Aorta (tissue), 5 donors: ENCODE measurements at regions of chr6 and their contacts with region 1.

Region 1: GRCh38 chr6:152218880-152219279 is 411.4 kb downstream of the ESR1 start:
- DNase-seq: no peak
- ATAC-seq: no peak
- H3K4me3 ChIP-seq: no peak overlapping the region
- H3K27ac ChIP-seq: no peak overlapping the region
- H3K4me1 ChIP-seq: no peaks in the 10 kb centered on the region
- H3K27me3 ChIP-seq: no peaks in the 10 kb centered on the region

Region 2: GRCh38 chr6:152160346-152160745 is 58.5 kb before region 1 on chr6:
- intact Hi-C with region 1: no loop called
- DNase-seq: no peak
- ATAC-seq: no peak
- H3K4me3 ChIP-seq: no peak overlapping the region
- H3K27ac ChIP-seq: no peak overlapping the region
- H3K4me1 ChIP-seq: no peaks in the 10 kb centered on the region
- H3K27me3 ChIP-seq: no peaks in the 10 kb centered on the region

Region 3: DNA sequence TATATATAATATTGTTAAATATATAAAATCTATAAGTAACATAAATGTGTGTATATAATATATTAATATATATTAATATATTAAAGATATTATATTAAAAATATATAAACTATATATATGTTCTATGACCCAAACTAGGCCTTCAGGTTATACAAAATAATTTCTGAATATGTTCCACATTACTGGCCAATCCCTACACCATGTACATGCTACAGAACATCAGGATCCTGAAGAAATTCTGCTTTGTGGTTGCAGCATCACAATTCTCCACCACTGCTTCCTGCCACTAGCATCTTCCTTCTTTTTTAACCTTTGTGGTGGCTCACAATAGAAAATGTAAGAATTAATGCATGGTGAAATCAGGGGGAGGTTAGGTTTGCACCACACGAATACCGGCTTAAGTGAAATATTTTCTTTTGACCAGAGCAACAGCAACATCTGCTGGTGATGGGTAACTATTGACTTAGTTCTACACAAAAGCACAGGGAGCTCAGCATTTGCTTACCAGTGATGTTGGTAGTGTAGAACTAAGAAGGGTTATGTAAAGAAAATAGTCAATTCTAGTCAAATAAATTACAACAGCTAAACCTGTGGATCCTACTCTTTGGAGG is 137.7 kb after region 1 on chr6:
- intact Hi-C with region 1: loop called in 1 of 2 experiments (anchors 10 kb)
- DNase-seq: no peak
- ATAC-seq: peak; percentile 41
- H3K4me3 ChIP-seq: no peak overlapping the region
- H3K27ac ChIP-seq: no peak overlapping the region
- H3K4me1 ChIP-seq: no peaks in the 10 kb centered on the region
- H3K27me3 ChIP-seq: no peaks in the 10 kb centered on the region

Region 4: DNA sequence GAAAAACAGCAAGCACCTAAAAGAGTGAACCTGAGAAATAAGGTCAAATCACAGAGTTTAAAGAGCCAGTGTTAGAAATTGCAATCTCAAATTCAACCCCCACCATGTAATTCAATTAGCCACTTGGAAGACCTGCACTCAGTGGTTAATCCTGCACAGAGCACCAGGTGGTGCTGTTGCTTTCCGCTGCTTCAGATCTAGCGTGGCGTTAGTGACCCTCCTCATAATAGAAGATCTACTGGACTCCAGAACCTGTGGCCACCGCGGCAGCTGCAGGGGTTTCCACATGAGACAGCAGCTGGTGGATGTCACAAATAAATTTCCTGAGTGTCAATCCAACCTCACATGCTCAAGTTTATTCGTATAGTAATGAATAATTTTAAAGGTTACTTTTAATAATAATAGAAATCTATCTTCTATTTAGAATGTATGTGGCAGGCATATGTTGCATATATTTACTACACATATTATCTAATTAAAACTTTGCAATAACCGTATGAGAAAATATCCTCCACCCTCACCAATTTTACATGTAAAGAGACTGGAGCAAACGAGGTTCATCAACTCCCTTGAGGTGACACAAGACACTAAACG is 333.8 kb after region 1 on chr6:
- intact Hi-C with region 1: no loop called
- DNase-seq: peak; percentile 64 to 84
- ATAC-seq: peak; percentile 88
- H3K4me3 ChIP-seq: no peak overlapping the region
- H3K27ac ChIP-seq: no peak overlapping the region
- H3K4me1 ChIP-seq: no peaks in the 10 kb centered on the region
- H3K27me3 ChIP-seq: no peaks in the 10 kb centered on the region

Region 5: DNA sequence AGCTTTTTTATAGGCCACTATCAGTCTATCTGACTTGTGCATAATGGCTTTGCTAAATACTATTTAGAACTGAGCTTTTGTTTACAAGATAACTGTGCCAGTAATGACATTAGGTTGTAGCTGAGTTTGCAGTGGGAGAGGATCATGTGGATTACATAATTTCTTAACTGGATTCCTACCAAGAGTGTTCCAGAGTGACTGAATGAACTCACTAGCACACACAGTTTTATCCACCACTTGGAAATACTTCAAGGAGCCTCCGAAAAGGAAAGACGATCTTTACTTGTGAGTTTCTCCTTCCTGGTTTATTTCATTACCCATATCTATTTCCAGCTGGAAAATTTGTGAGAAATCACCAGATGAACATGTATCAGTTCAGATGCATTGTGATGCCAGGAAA is 429.2 kb after region 1 on chr6:
- intact Hi-C with region 1: no loop called
- DNase-seq: no peak
- ATAC-seq: no peak
- H3K4me3 ChIP-seq: no peak overlapping the region
- H3K27ac ChIP-seq: no peak overlapping the region
- H3K4me1 ChIP-seq: no peaks in the 10 kb centered on the region
- H3K27me3 ChIP-seq: no peaks in the 10 kb centered on the region